Breast epithelium (tissue), 4 donors: ENCODE measurements at regions of chr14 and their contacts with region 1.

Region 1: DNA sequence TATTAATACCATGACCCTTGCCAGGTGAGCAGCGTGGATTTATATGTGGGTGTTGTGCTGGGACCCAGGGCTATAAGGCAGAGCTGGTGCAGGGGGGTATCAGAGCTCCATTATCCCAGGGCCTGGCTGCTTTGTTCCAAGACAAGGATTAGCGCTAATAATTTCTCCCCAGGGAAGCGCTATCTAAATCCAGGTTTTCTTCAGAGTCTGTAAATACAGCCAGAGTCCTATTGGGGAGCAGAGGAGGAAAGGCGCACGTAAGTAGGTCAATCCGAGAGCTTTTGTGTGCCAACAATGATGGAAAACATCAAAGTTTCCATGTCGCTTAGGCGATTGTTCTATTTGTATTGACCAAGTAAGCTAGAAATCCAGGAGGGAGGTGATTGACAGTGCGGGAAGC is 1009.7 kb downstream of the VRK1 start:
- DNase-seq: no peak
- H3K4me3 ChIP-seq: no peak overlapping the region
- H3K27ac ChIP-seq: no peak overlapping the region
- H3K4me1 ChIP-seq: no peaks in the 10 kb centered on the region
- H3K27me3 ChIP-seq: no peaks in the 10 kb centered on the region
- CTCF ChIP-seq: no peak
- POLR2A ChIP-seq: no peak

Region 2: DNA sequence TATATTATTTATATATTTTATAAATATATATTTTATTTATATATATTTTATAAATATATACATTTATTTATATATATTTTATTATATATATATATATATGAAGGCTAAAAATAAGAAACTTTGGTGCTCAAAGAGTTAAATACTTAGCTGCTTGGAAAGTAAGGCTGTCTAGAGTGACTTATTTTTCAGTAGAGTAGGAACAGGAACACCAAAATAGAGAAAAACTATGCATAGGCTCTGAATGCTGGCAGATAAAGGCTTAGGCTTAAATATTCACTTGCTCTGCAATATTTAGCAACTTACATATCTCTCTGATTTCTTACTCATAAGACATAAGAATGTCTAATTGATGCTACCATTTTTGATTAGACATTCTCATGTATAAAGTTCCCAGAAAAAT is 18.5 kb before region 1 on chr14:
- intact Hi-C with region 1: loop called (anchors 1 kb)
- DNase-seq: no peak
- H3K4me3 ChIP-seq: no peak overlapping the region
- H3K27ac ChIP-seq: no peak overlapping the region
- H3K4me1 ChIP-seq: no peaks in the 10 kb centered on the region
- H3K27me3 ChIP-seq: no peaks in the 10 kb centered on the region
- CTCF ChIP-seq: no peak
- POLR2A ChIP-seq: no peak

Region 3: DNA sequence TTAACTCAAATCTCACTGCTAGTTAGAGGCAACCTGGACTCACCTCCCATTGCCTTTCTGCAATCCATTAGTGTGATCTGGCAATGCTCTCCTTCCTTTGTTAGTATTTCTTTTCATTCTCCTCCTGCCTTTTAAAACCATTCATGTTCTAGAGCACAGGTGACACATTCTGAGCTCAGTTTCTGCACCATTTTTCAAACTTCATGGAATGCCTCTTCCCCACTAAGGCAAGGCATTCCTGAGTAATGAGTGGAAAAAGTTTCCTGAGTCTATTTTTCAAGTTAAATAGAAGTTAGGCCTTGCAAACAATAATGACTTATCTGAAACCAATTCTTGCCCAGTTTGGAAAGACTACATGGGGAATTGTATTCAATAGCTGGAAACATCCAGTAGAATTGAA is 463.3 kb after region 1 on chr14:
- intact Hi-C with region 1: no loop called
- DNase-seq: no peak
- H3K4me3 ChIP-seq: no peak overlapping the region
- H3K27ac ChIP-seq: no peak overlapping the region
- H3K4me1 ChIP-seq: no peaks in the 10 kb centered on the region
- H3K27me3 ChIP-seq: peaks cover 0 to 2% of the 10 kb centered on the region in 2 donors
- CTCF ChIP-seq: no peak
- POLR2A ChIP-seq: no peak